Uterus (tissue), 4 donors: ENCODE measurements at regions of chr1 and their contacts with region 1.

Region 1: GRCh38 chr1:214331827-214332423 is 51.0 kb downstream of the SMYD2 start:
- DNase-seq: no peak
- H3K4me3 ChIP-seq: no peak overlapping the region
- H3K27ac ChIP-seq: no peak overlapping the region
- H3K4me1 ChIP-seq: no peaks in the 10 kb centered on the region
- H3K27me3 ChIP-seq: no peaks in the 10 kb centered on the region
- CTCF ChIP-seq: peak in 3 of 4 experiments; percentile 20 to 51 (median 41)
- POLR2A ChIP-seq: no peak

Region 2: GRCh38 chr1:214261206-214262123 is 70.5 kb before region 1 on chr1:
- intact Hi-C with region 1: loop called (anchors 5 kb)
- DNase-seq: peak; percentile 74 to 81
- H3K4me3 ChIP-seq: no peak overlapping the region
- H3K27ac ChIP-seq: no peak overlapping the region
- H3K4me1 ChIP-seq: no peaks in the 10 kb centered on the region
- H3K27me3 ChIP-seq: peaks cover 0 to 17% of the 10 kb centered on the region in 2 donors
- CTCF ChIP-seq: peak; percentile 79 to 95 (median 87)
- POLR2A ChIP-seq: no peak

Region 3: GRCh38 chr1:214494706-214495105 is 162.8 kb after region 1 on chr1:
- intact Hi-C with region 1: no loop called
- DNase-seq: no peak
- H3K4me3 ChIP-seq: no peak overlapping the region
- H3K27ac ChIP-seq: peak overlapping the region in 1 of 2 donors; percentile 27
- H3K4me1 ChIP-seq: no peaks in the 10 kb centered on the region
- H3K27me3 ChIP-seq: no peaks in the 10 kb centered on the region
- CTCF ChIP-seq: no peak
- POLR2A ChIP-seq: no peak

Region 4: GRCh38 chr1:214584805-214585766 is 253.2 kb after region 1 on chr1:
- intact Hi-C with region 1: loop called (anchors 5 kb)
- DNase-seq: no peak
- H3K4me3 ChIP-seq: no peak overlapping the region
- H3K27ac ChIP-seq: no peak overlapping the region
- H3K4me1 ChIP-seq: no peaks in the 10 kb centered on the region
- H3K27me3 ChIP-seq: no peaks in the 10 kb centered on the region
- CTCF ChIP-seq: peak; percentile 72 to 79 (median 77)
- POLR2A ChIP-seq: no peak